ENCODE measurements at regions of chr5 and their contacts with region 1.

Region 1: GRCh38 chr5:80083101-80083890 is 48.1 kb downstream of the THBS4 start:
- DNase-seq: peak; percentile 72
- H3K4me3 Mint-ChIP-seq: peak overlapping the region; percentile 76
- H3K27ac Mint-ChIP-seq: peak overlapping the region; percentile 81
- H3K4me1 Mint-ChIP-seq: peaks cover 7% of the 10 kb centered on the region
- H3K27me3 Mint-ChIP-seq: no peaks in the 10 kb centered on the region

Region 2: DNA sequence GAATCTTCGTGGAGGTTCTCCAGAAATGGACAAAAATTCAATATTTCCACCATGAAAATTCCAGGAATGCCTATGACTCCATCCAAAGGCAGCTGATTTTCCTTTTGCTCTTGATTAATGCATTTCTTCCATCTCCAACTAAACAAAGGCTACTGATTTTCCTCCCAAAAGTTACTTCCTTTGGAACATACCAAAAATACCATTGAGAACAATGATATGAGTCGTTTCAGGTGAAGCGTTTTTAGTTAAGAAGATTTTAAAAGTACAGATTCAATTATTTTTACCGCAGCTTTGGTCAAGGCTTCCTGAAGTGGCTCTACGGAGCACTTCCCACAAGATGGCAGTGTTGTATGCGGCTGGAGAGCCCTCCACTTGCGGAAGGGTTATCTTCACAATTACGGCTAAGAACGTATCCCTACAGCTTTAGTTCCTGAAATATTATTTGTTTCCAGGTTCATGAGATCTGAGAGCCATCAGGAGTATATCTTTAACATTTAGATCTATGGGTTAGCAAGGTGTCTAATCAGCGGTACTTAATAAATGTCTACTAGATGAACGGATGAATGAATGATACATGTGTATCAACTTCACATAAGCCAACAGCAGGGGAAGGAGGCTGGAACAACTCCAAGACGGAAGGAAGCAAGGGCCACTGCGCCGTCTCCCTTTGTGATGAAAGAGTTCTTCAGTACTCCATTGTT is 1062.3 kb before region 1 on chr5:
- intact Hi-C with region 1: loop called (anchors 10 kb)
- DNase-seq: peak; percentile 76
- H3K4me3 Mint-ChIP-seq: no peak overlapping the region
- H3K27ac Mint-ChIP-seq: no peak overlapping the region
- H3K4me1 Mint-ChIP-seq: peaks cover 11% of the 10 kb centered on the region
- H3K27me3 Mint-ChIP-seq: peaks cover 72% of the 10 kb centered on the region

Region 3: GRCh38 chr5:79612667-79613198 is 470.6 kb before region 1 on chr5:
- intact Hi-C with region 1: loop called (anchors 10 kb)
- DNase-seq: no peak
- H3K4me3 Mint-ChIP-seq: peak overlapping the region; percentile 94
- H3K27ac Mint-ChIP-seq: peak overlapping the region; percentile 97
- H3K4me1 Mint-ChIP-seq: peaks cover 28% of the 10 kb centered on the region
- H3K27me3 Mint-ChIP-seq: no peaks in the 10 kb centered on the region

Region 4: GRCh38 chr5:79712741-79713140 is 370.6 kb before region 1 on chr5:
- intact Hi-C with region 1: no loop called
- DNase-seq: no peak
- H3K4me3 Mint-ChIP-seq: no peak overlapping the region
- H3K27ac Mint-ChIP-seq: no peak overlapping the region
- H3K4me1 Mint-ChIP-seq: no peaks in the 10 kb centered on the region
- H3K27me3 Mint-ChIP-seq: peaks cover 4% of the 10 kb centered on the region

Region 5: DNA sequence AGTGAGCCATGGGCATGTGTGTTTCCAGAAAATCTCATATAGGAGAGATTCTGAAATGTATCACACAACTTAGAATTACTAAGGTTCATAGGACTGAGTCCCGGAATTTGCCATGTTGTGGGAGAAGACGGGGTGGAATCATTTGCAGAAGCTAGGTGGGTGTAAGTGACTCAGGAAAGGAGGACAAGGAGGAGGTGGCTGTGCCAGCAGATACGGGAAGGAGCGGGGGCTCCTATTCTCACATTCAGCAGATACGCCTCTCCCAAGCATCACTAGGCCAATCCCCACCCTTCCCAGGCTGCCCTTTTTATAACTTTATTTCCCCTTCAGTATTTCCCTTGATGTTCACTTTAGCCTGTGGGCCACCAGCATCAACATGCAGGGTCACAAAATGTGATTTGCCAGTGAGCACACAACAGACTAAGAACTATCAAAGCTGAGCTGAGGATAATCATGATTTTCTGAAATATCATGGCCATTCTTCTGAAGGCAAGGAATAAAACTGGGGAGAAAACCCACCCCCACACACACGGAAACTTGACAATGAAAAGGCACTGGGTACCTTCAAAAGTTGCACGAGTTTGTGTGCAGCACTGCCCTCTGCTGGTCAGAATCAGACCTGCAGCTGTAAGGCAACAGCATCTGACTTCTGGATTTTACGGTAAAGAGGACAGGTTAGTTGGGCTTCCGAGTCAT is 225.4 kb before region 1 on chr5:
- intact Hi-C with region 1: loop called (anchors 1 kb)
- DNase-seq: peak; percentile 94
- H3K4me3 Mint-ChIP-seq: no peak overlapping the region
- H3K27ac Mint-ChIP-seq: no peak overlapping the region
- H3K4me1 Mint-ChIP-seq: peaks cover 9% of the 10 kb centered on the region
- H3K27me3 Mint-ChIP-seq: peaks cover 17% of the 10 kb centered on the region

Region 6: GRCh38 chr5:79924936-79925893 is 158.1 kb before region 1 on chr5:
- intact Hi-C with region 1: loop called (anchors 1 kb)
- DNase-seq: peak; percentile 70
- H3K4me3 Mint-ChIP-seq: no peak overlapping the region
- H3K27ac Mint-ChIP-seq: no peak overlapping the region
- H3K4me1 Mint-ChIP-seq: no peaks in the 10 kb centered on the region
- H3K27me3 Mint-ChIP-seq: peaks cover 10% of the 10 kb centered on the region

Measured in activated CD4-positive, alpha-beta T cell treated with anti-CD3 and anti-CD28 coated beads, Interleukin-2, amount 10 ng/mL, durations not matched to agents 24 days and 14 days (primary cell).